ENCODE measurements at regions of chr13 and their contacts with region 1.

Region 1: DNA sequence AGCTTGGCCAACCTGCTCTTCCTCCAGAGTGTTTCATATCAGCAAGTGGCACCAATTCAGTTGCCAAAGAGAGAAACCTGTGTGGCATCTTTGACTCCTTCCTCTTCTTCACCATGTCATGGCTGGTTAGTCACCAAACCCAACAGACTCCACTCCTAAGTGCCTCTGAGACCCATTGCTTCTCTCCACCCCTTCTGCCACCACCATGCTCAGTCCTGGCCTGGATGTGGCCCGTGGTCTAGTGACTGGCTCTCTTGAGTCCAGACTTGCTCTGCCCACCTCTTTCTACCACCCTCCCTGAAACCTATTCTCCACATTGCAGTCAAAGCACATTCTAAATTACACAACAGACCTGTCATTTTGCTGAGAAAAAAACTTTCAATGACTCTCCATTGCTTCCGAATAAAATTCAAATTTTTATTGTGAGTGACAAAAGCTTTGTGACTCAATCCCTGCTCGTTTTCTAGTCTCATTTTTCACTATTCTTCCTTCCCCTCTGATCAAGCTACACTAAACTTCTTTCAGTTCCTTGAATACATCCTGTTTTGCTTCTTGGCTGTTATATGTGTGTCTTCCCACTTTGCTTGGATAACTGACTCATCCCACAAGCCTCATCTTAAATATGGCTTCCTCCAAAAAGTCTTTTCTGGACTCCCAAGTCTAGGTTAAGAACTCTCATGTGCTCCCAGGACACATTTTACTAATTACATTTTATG is 12.0 kb upstream of the TNFSF11 start:
- DNase-seq: peak; percentile 70
- H3K4me3 Mint-ChIP-seq: no peak overlapping the region
- H3K27ac Mint-ChIP-seq: peak overlapping the region; percentile 66
- H3K4me1 Mint-ChIP-seq: peaks cover 20% of the 10 kb centered on the region
- H3K27me3 Mint-ChIP-seq: no peaks in the 10 kb centered on the region

Region 2: DNA sequence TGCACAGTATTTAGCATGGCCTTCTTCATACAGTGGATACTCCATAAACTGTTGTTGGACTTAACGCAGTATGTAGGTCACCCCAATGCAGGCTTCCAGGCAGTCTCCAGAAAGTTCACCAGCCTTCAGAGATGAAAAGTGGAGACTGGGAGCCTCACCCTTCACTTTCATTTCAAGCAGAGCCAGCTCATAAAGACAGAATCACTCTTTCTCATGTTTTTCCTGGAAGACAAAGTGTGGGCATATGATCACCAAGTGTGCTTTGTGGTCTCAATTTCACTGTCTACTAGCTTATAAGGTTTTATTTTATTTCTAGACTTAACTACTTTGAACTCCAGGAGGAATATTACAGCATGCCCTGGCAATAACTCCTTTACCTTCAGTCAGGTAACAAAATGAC is 14.3 kb before region 1 on chr13:
- CTCF ChIA-PET with region 1: no interaction called
- POLR2A ChIA-PET with region 1: interaction called, 3 read pairs
- intact Hi-C with region 1: loop called (anchors 2 kb)
- DNase-seq: peak; percentile 37
- H3K4me3 Mint-ChIP-seq: no peak overlapping the region
- H3K27ac Mint-ChIP-seq: no peak overlapping the region
- H3K4me1 Mint-ChIP-seq: peaks cover 22% of the 10 kb centered on the region
- H3K27me3 Mint-ChIP-seq: peaks cover 2% of the 10 kb centered on the region

Region 3: GRCh38 chr13:43116242-43116641 is 554.3 kb after region 1 on chr13:
- CTCF ChIA-PET with region 1: no interaction called
- POLR2A ChIA-PET with region 1: no interaction called
- intact Hi-C with region 1: no loop called
- DNase-seq: no peak
- H3K4me3 Mint-ChIP-seq: no peak overlapping the region
- H3K27ac Mint-ChIP-seq: no peak overlapping the region
- H3K4me1 Mint-ChIP-seq: no peaks in the 10 kb centered on the region
- H3K27me3 Mint-ChIP-seq: peaks cover 4% of the 10 kb centered on the region